Activated CD4-positive, alpha-beta memory T cell treated with anti-CD3 and anti-CD28 coated beads for 36 hours (primary cell): ENCODE measurements at regions of chr12 and their contacts with region 1.

Region 1: GRCh38 chr12:69585189-69586062 is at the start of gene CCT2:
- DNase-seq: peak; percentile 97
- H3K4me3 Mint-ChIP-seq: peak within 1 kb of the TSS; percentile 83
- H3K27ac Mint-ChIP-seq: peak within 1 kb of the TSS; percentile 90
- H3K4me1 Mint-ChIP-seq: peaks cover 31% of the 10 kb centered on the region
- H3K27me3 Mint-ChIP-seq: no peaks in the 10 kb centered on the region
- total RNA-seq, gene CCT2: 264 to 267 TPM

Region 2: GRCh38 chr12:69290545-69291277 is 294.7 kb before region 1 on chr12:
- CTCF ChIA-PET with region 1: interaction called, 6 read pairs
- POLR2A ChIA-PET with region 1: no interaction called
- intact Hi-C with region 1: loop called (anchors 1 kb)
- DNase-seq: peak; percentile 87
- H3K4me3 Mint-ChIP-seq: no peak overlapping the region
- H3K27ac Mint-ChIP-seq: no peak overlapping the region
- H3K4me1 Mint-ChIP-seq: peaks cover 7% of the 10 kb centered on the region
- H3K27me3 Mint-ChIP-seq: peaks cover 15% of the 10 kb centered on the region

Region 3: GRCh38 chr12:69470189-69471075 is 115.0 kb before region 1 on chr12 and contains the start of gene FRS2:
- CTCF ChIA-PET with region 1: interaction called, 5 read pairs
- POLR2A ChIA-PET with region 1: interaction called, 3 read pairs
- intact Hi-C with region 1: loop called (anchors 1 kb)
- DNase-seq: peak; percentile 92
- H3K4me3 Mint-ChIP-seq: peak within 1 kb of the TSS; percentile 98
- H3K27ac Mint-ChIP-seq: peak within 1 kb of the TSS; percentile 93
- H3K4me1 Mint-ChIP-seq: peaks cover 41% of the 10 kb centered on the region
- H3K27me3 Mint-ChIP-seq: no peaks in the 10 kb centered on the region
- total RNA-seq, gene FRS2: 8.6 to 9.5 TPM

Region 4: GRCh38 chr12:69738351-69739286 is 153.2 kb after region 1 on chr12 and contains the start of gene RAB3IP:
- CTCF ChIA-PET with region 1: no interaction called
- POLR2A ChIA-PET with region 1: no interaction called
- intact Hi-C with region 1: loop called (anchors 1 kb)
- DNase-seq: peak; percentile 95
- H3K4me3 Mint-ChIP-seq: peak within 1 kb of the TSS; percentile 90
- H3K27ac Mint-ChIP-seq: peak within 1 kb of the TSS; percentile 84
- H3K4me1 Mint-ChIP-seq: peaks cover 24% of the 10 kb centered on the region
- H3K27me3 Mint-ChIP-seq: peaks cover 1% of the 10 kb centered on the region
- total RNA-seq, gene RAB3IP: 30.3 to 34.0 TPM

Region 5: DNA sequence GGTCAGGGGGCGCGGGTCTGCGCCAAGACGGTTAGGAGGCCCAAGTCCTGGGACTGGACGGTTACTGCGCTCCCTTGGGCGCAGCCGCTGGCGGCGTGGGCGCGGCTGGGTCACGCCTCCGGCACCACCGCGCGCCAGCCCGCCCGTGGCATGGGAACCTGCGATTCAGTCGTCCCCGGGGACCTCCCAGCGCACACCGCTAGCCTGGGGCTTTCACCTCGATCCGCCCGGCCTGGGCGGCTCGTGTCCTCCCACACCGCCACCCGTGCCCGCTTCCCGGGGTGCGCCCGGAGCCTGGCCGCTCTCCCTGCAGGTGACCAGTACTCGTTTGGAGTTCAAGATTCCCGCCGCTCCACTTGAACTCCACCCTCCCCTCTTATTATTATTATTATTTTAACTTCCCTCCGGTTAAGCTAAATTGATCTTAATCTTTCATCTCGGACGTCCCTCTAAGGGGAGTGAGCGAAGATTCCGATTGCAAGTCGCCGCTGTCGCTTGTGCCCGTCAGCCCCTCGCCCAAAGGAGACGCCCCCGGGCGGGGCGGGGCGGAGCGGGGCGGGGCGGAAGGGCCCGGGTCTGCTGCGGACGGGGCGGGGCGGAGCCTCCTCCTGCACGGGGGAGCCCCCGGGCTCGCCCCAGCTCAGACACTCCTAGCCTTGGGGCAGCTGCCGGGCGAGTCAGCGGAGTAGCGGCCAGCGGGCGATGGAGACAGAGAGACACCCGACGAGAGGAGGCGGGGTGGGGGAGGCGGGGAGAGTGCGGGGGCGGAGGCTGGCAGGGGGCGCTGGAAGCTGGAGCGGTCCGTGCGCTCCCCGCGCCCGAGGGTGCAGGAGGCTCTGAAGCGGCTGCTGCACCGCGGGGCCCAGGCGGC is 780.5 kb after region 1 on chr12 and contains the start of gene KCNMB4:
- CTCF ChIA-PET with region 1: no interaction called
- POLR2A ChIA-PET with region 1: no interaction called
- intact Hi-C with region 1: loop called (anchors 10 kb)
- DNase-seq: peak; percentile 83
- H3K4me3 Mint-ChIP-seq: peak within 1 kb of the TSS; percentile 90
- H3K27ac Mint-ChIP-seq: peak within 1 kb of the TSS; percentile 51
- H3K4me1 Mint-ChIP-seq: peaks cover 18% of the 10 kb centered on the region
- H3K27me3 Mint-ChIP-seq: peaks cover 5% of the 10 kb centered on the region
- total RNA-seq, gene KCNMB4: 1.3 to 1.5 TPM